PC-3 (cell line): ENCODE measurements at regions of chr2 and their contacts with region 1.

Region 1: DNA sequence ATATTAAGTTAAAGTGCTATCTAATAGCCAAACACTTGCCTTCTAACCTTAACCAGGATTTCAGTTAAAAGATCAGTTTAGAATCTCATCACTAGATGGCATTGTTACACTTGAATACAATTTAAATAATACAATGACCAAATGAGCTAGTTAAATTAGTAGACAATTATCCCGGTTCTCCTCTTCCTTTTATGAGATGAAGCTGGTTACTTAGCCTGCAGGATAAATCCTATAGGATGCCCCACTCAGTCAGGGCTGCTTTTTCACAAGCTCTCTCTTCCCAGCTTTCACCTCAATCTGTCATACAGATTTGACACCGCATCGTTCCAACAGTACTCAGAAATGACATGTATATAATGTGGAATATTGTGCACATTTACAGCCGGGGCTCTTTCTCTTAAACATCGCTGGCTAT is 678.8 kb downstream of the KCNJ3 start:
- DNase-seq: peak; percentile 63
- ATAC-seq: peak; percentile 38; the same call in 1 of the 2 replicates
- H3K4me3 ChIP-seq: no peak overlapping the region
- H3K27ac ChIP-seq: no peak overlapping the region
- H3K4me1 ChIP-seq: no peaks in the 10 kb centered on the region
- H3K27me3 ChIP-seq: no peaks in the 10 kb centered on the region
- CTCF ChIP-seq: peak; percentile 68

Region 2: GRCh38 chr2:155336158-155336557 is 41.1 kb before region 1 on chr2:
- CTCF ChIA-PET with region 1: no interaction called
- POLR2A ChIA-PET with region 1: no interaction called
- intact Hi-C with region 1: no loop called
- DNase-seq: no peak
- ATAC-seq: no peak
- H3K4me3 ChIP-seq: no peak overlapping the region
- H3K27ac ChIP-seq: no peak overlapping the region
- H3K4me1 ChIP-seq: no peaks in the 10 kb centered on the region
- H3K27me3 ChIP-seq: no peaks in the 10 kb centered on the region
- CTCF ChIP-seq: no peak

Region 3: DNA sequence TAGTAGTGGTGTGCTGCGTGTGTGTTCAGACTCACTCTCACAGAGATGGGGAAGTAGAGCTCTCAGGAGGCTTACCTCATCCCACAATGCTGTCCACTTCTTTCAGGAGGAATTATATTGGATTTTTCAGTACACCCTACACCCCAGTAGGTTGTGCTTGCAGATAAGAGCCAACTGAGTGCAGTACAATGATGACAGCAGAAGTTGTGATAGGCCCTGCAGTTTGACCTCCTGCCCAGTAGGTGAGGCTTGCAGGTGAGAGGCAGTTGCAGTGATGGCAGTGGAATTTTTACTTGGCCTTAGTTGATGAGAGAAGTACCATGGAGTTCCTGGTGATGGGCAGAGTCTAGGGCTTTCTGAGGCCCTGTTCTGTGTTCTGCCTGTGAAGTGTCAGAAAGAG is 21.0 kb before region 1 on chr2:
- CTCF ChIA-PET with region 1: no interaction called
- POLR2A ChIA-PET with region 1: no interaction called
- intact Hi-C with region 1: no loop called
- DNase-seq: no peak
- ATAC-seq: no peak
- H3K4me3 ChIP-seq: no peak overlapping the region
- H3K27ac ChIP-seq: no peak overlapping the region
- H3K4me1 ChIP-seq: no peaks in the 10 kb centered on the region
- H3K27me3 ChIP-seq: no peaks in the 10 kb centered on the region
- CTCF ChIP-seq: no peak

Region 4: DNA sequence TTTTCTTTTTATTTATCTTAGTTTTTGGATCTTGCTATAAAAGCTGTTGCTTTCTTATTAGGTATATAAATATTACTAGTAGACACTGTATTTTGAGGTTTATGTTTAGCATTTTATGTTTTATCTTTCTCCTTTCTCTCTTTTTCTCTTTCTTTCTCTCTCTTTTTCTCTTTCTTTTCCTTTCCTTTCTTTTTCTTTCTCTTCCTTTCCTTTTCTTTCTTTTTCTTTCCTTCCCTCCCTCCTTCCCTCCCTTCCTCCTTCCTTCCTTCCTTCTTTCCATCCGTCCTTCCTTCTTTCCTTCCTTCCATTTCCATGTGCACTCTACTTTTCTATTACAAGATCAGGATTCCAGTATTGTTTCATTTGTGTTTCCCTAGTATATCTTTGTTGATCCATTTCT is 136.0 kb after region 1 on chr2:
- CTCF ChIA-PET with region 1: no interaction called
- POLR2A ChIA-PET with region 1: no interaction called
- intact Hi-C with region 1: no loop called
- DNase-seq: no peak
- ATAC-seq: no peak
- H3K4me3 ChIP-seq: no peak overlapping the region
- H3K27ac ChIP-seq: no peak overlapping the region
- H3K4me1 ChIP-seq: no peaks in the 10 kb centered on the region
- H3K27me3 ChIP-seq: no peaks in the 10 kb centered on the region
- CTCF ChIP-seq: no peak

Region 5: GRCh38 chr2:155663265-155663664 is 286.0 kb after region 1 on chr2:
- CTCF ChIA-PET with region 1: no interaction called
- POLR2A ChIA-PET with region 1: no interaction called
- intact Hi-C with region 1: loop called (anchors 5 kb)
- DNase-seq: peak; percentile 67
- ATAC-seq: peak; percentile 92
- H3K4me3 ChIP-seq: no peak overlapping the region
- H3K27ac ChIP-seq: peak overlapping the region; percentile 63
- H3K4me1 ChIP-seq: peaks cover 11% of the 10 kb centered on the region
- H3K27me3 ChIP-seq: no peaks in the 10 kb centered on the region
- CTCF ChIP-seq: no peak

Region 6: GRCh38 chr2:155815886-155816285 is 438.6 kb after region 1 on chr2:
- CTCF ChIA-PET with region 1: interaction called, 9 read pairs
- POLR2A ChIA-PET with region 1: no interaction called
- intact Hi-C with region 1: loop called (anchors 1 kb)
- DNase-seq: peak; percentile 63
- ATAC-seq: peak; percentile 61
- H3K4me3 ChIP-seq: no peak overlapping the region
- H3K27ac ChIP-seq: no peak overlapping the region
- H3K4me1 ChIP-seq: no peaks in the 10 kb centered on the region
- H3K27me3 ChIP-seq: no peaks in the 10 kb centered on the region
- CTCF ChIP-seq: peak; percentile 62

Region 7: DNA sequence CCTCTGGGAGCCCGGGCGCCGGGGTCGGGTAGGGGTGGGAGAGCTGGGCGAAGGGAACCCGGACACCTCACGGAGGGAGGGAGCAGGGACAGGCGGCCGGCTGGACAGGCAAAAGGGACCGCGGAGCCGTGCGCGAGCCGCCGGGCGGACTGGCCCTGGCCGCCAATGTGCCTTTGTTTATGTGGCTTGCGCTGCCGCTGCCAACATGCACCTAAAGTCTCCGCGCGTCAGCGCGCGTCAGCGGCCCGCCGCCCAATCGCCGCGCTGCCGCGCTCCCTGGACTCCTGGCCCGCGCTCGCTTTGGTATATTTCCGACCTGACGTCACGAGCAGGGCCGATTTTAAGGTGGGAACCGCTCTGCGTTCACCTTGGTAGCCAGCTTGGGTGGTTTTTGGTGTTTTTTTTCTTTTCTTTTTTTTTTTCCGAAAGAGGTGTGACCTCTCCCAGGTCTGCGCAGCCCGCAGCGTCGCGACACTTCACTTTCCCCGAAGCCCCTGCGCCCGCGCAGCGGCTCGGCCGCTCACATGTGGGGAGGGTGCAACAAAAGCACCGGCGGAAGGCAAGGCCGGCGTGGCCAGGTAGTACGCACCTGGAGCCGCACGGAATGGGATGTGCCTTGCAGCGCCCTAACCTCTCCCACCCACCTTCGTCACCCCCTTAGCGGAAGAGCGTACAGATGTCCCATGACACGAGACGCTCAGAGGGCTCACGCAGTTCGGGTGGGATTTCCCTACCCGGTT is 955.4 kb after region 1 on chr2 and contains the start of gene NR4A2:
- CTCF ChIA-PET with region 1: interaction called, 4 read pairs
- POLR2A ChIA-PET with region 1: no interaction called
- intact Hi-C with region 1: loop called (anchors 1 kb)
- DNase-seq: peak; percentile 90
- ATAC-seq: peak; percentile 62
- H3K4me3 ChIP-seq: peak within 1 kb of the TSS; percentile 95
- H3K27ac ChIP-seq: peak within 1 kb of the TSS; percentile 97
- H3K4me1 ChIP-seq: peaks cover 14% of the 10 kb centered on the region; the same call in 1 of the 2 replicates
- H3K27me3 ChIP-seq: no peaks in the 10 kb centered on the region
- CTCF ChIP-seq: no peak
- total RNA-seq, gene NR4A2: 12.0 and 13.8 TPM in 2 replicates

Region 8: GRCh38 chr2:156589381-156590079 is 1212.3 kb after region 1 on chr2:
- CTCF ChIA-PET with region 1: no interaction called
- POLR2A ChIA-PET with region 1: no interaction called
- intact Hi-C with region 1: loop called (anchors 1 kb)
- DNase-seq: peak; percentile 67
- ATAC-seq: peak; percentile 76
- H3K4me3 ChIP-seq: no peak overlapping the region
- H3K27ac ChIP-seq: no peak overlapping the region
- H3K4me1 ChIP-seq: no peaks in the 10 kb centered on the region
- H3K27me3 ChIP-seq: no peaks in the 10 kb centered on the region
- CTCF ChIP-seq: peak; percentile 77

Region 9: GRCh38 chr2:157055660-157056199 is 1678.5 kb after region 1 on chr2:
- CTCF ChIA-PET with region 1: interaction called, 14 read pairs
- POLR2A ChIA-PET with region 1: no interaction called
- intact Hi-C with region 1: loop called (anchors 5 kb)
- DNase-seq: peak; percentile 58
- ATAC-seq: no peak
- H3K4me3 ChIP-seq: no peak overlapping the region
- H3K27ac ChIP-seq: peak overlapping the region; percentile 38
- H3K4me1 ChIP-seq: peaks cover 20% of the 10 kb centered on the region
- H3K27me3 ChIP-seq: no peaks in the 10 kb centered on the region
- CTCF ChIP-seq: peak; percentile 80